ENCODE measurements at regions of chr21 and their contacts with region 1.

Region 1: GRCh38 chr21:28516991-28517592 is 475.6 kb downstream of the LTN1 start:
- DNase-seq: peak; percentile 25
- ATAC-seq: peak; percentile 95
- H3K4me3 Mint-ChIP-seq: no peak overlapping the region
- H3K27ac Mint-ChIP-seq: no peak overlapping the region
- H3K4me1 Mint-ChIP-seq: peaks cover 8% of the 10 kb centered on the region
- H3K27me3 Mint-ChIP-seq: peaks cover 2% of the 10 kb centered on the region
- CTCF ChIP-seq: no peak

Region 2: DNA sequence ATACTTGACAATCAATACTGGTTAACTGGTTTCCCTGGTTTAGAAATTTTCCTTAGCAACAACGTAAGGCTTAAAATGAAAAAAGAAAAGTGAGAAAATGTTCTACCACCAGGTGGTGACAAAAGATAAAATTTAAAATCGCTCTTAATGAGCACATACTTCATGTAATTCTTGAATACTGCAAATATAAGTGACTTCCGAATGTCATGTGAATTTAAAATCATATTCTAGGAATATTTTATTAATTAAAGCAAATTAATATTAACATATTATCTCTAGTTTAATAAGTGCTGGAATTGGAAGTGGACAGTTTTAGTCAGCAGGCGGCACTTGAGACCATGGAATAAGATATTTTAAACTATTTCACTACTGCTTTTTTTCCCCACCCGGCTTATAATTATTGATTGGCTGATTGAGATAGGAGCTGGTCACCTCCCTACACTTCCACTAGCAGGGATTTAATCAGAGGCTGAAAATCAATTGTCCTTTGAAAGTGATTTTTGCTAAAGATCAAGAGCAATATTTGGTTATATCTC is 1666.9 kb before region 1 on chr21:
- CTCF ChIA-PET with region 1: no interaction called
- POLR2A ChIA-PET with region 1: no interaction called
- intact Hi-C with region 1: loop called (anchors 5 kb)
- DNase-seq: no peak
- ATAC-seq: no peak
- H3K4me3 Mint-ChIP-seq: no peak overlapping the region
- H3K27ac Mint-ChIP-seq: no peak overlapping the region
- H3K4me1 Mint-ChIP-seq: peaks cover 19% of the 10 kb centered on the region
- H3K27me3 Mint-ChIP-seq: peaks cover 34% of the 10 kb centered on the region
- CTCF ChIP-seq: no peak

Region 3: DNA sequence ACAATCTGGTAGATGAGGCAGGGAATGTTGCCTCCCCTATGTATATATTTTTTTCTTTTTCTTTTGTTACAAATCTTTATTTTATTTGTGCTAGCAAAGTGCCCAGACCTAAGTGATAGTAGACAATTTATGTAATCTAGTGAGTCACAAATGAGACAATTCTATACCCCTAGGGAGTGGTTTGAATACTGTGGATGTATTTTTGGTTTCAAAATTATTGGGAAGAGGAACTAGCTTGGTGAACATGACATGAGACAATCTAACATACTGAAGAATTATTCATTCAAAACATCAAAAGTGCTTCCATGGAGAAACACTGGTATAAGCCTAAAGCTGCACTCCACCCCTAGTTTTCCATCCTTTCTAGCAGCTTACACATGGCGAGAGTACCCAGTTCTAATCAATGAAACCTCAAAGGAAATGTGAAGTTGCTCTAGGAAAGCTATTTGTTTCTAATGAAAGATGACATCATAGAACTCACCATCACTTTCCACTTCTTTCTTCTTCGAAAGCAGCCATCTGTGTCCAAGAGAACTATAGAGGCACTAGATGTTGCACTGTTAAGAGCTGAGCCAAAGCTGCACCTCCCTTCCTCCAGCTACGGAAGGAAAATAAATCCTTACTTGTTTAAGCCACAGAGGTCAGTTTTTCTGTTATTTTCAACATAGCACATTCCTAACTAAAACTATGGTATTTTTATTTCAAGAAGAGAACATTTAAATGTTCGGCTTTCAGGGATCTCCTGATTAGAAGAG is 289.0 kb before region 1 on chr21:
- CTCF ChIA-PET with region 1: no interaction called
- POLR2A ChIA-PET with region 1: no interaction called
- intact Hi-C with region 1: no loop called
- DNase-seq: no peak
- ATAC-seq: no peak
- H3K4me3 Mint-ChIP-seq: no peak overlapping the region
- H3K27ac Mint-ChIP-seq: no peak overlapping the region
- H3K4me1 Mint-ChIP-seq: no peaks in the 10 kb centered on the region
- H3K27me3 Mint-ChIP-seq: no peaks in the 10 kb centered on the region
- CTCF ChIP-seq: no peak

Region 4: DNA sequence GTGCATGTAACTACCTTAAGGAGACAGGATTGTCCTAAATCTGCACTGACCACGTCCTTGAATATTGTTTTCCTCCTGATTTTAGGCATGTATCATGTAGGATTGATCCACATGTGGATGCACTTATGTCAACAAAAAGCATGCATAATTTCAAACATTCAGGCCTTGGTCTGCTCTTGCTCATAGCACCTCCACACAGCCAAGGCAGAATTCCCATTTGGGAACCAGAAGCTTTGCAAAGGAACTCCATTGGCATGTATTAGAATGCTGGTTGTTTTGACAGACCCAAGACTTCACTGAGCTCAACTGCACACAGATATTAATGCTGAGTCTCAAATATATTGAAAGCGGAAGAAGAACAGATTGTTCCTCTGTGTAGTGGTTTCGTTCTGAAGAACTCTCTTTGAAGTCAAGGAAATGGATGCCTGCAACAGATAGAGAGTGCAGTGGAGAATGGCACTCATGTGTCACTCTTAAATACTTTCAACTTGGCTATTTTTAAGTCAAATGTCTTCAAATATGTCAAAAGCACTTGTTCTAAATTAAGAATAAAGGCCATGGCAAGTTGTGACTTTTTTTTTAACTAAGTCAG is 88.0 kb after region 1 on chr21:
- CTCF ChIA-PET with region 1: no interaction called
- POLR2A ChIA-PET with region 1: no interaction called
- intact Hi-C with region 1: loop called (anchors 2 kb)
- DNase-seq: no peak
- ATAC-seq: peak; percentile 99
- H3K4me3 Mint-ChIP-seq: peak overlapping the region; percentile 54
- H3K27ac Mint-ChIP-seq: no peak overlapping the region
- H3K4me1 Mint-ChIP-seq: peaks cover 35% of the 10 kb centered on the region
- H3K27me3 Mint-ChIP-seq: no peaks in the 10 kb centered on the region
- CTCF ChIP-seq: no peak

Region 5: GRCh38 chr21:28943631-28944030 is 426.5 kb after region 1 on chr21:
- CTCF ChIA-PET with region 1: interaction called, 6 read pairs
- POLR2A ChIA-PET with region 1: no interaction called
- intact Hi-C with region 1: loop called (anchors 1 kb)
- DNase-seq: no peak
- ATAC-seq: no peak
- H3K4me3 Mint-ChIP-seq: no peak overlapping the region
- H3K27ac Mint-ChIP-seq: no peak overlapping the region
- H3K4me1 Mint-ChIP-seq: no peaks in the 10 kb centered on the region
- H3K27me3 Mint-ChIP-seq: no peaks in the 10 kb centered on the region
- CTCF ChIP-seq: no peak

Region 6: DNA sequence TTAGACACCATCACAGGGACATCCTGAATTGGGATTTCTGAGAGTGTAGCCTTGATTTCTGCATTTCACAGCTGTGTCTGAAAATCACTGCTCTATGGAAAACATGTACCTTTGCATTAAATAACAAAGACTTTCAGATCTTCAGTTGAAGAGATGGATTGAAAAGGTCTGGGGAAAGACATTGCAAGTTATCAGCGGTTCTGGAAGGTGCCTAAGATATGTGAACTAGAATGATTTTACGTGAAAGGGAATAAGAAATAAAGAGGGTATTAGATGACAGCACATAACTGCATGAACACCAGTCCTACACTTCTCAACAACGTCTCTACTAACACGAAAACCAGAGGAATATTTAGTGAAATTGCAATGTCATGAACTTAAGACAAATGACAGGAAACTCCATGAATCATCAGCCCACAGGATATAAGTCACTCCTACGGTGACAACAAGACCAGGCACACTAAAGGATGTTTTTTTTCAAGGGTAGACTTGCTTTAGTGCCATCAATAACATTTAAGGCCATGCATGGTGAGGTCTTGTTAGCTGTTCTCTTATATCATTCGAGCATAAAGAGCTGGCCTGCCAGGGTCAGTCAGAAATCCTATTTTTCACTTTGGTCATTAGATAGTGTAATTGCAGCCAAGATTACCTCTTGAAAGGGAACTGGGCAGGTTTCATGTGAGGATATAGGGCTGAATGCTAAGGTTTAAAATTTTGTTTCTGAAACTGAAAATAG is 1139.6 kb after region 1 on chr21:
- CTCF ChIA-PET with region 1: no interaction called
- POLR2A ChIA-PET with region 1: no interaction called
- intact Hi-C with region 1: no loop called
- DNase-seq: no peak
- ATAC-seq: no peak
- H3K4me3 Mint-ChIP-seq: no peak overlapping the region
- H3K27ac Mint-ChIP-seq: no peak overlapping the region
- H3K4me1 Mint-ChIP-seq: peaks cover 6% of the 10 kb centered on the region
- H3K27me3 Mint-ChIP-seq: no peaks in the 10 kb centered on the region
- CTCF ChIP-seq: no peak